Endothelial cell of umbilical vein (primary cell): ENCODE measurements at regions of chr2 and their contacts with region 1.

Region 1: GRCh38 chr2:119826370-119826961 is 66.7 kb downstream of the PTPN4 start:
- DNase-seq: peak; percentile 49
- H3K4me3 ChIP-seq: no peak overlapping the region
- H3K27ac ChIP-seq: no peak overlapping the region
- H3K4me1 ChIP-seq: peaks cover 9% of the 10 kb centered on the region
- H3K27me3 ChIP-seq: no peaks in the 10 kb centered on the region
- CTCF ChIP-seq: peak; percentile 68 to 71
- POLR2A ChIP-seq: no peak

Region 2: DNA sequence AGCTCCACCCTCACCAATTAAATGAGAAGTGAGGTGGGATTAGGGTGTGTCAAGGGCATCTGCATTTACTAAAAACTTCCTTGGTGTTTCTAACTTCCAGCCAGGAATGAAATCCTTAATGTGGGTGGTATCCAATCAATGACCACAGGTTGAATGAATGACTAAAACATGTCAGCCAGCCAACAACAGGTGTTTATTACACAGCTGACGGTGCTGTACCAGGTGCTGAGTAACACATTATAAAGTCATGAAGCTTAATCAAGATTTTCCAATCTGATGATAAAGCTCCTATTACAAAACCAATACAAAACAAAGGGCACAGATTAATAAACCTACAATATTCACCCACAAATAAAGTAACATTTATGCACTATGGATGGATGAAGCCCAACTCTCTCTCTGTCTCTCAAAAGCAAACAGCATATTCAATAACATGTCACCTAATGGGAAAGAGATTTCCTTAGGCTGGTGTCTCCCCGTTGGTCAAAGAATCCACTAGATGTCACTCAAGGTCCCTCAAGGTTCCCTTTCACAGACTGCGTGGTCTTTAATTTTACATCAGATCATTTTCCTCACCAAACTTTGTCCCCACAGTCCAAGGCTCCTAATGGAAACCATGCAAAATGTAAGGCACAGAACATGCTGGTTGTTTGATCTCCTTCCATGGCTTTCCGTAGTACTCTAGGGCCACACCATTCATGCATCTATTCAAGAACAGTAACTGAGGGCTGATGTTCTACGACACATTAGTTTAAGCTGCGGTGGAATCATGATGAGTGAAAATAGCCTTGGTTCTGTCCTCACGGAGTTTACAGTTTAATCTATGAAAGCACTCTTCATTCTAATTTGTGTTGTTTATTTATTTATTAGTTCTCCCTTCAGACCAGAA is 73.2 kb before region 1 on chr2:
- CTCF ChIA-PET with region 1: interaction called, 186 read pairs
- POLR2A ChIA-PET with region 1: no interaction called
- dilution Hi-C with region 1: no loop called
- intact Hi-C with region 1: loop called (anchors 1 kb)
- DNase-seq: peak; percentile 65
- H3K4me3 ChIP-seq: no peak overlapping the region
- H3K27ac ChIP-seq: no peak overlapping the region
- H3K4me1 ChIP-seq: peaks cover 14% of the 10 kb centered on the region
- H3K27me3 ChIP-seq: no peaks in the 10 kb centered on the region
- CTCF ChIP-seq: peak; percentile 67 to 68
- POLR2A ChIP-seq: no peak

Region 3: DNA sequence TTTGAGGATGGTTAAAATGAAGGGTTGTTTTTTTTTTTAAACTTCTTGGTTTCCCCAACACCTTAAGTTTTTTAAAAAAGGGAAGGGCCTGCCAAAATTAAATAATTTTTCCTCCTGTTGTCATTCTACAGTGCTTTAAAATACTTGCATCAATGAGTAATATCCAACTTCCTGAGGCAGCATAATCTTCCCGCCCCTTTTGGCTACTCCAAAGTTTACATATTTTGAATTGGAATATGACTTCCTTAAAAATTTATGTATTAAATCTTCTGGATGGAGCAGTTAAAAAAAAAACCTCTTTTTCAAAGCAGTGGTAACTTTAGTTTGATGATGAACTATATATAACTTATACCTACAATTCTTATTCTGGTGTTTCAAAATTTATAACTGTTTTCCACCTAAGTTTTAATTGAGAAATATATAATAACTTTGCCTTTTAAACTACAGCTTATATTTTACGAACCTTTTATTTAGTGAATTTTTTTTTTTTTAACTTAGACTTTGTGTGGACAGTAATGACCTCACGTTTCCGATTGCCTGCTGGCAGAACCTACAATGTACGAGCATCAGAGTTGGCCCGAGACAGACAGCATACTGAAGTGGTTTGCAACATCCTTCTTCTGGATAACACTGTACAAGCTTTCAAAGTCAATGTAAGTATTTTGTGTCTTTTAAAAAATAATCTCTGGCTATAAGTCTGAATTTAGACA is 17.0 kb before region 1 on chr2:
- CTCF ChIA-PET with region 1: interaction called, 17 read pairs
- POLR2A ChIA-PET with region 1: no interaction called
- dilution Hi-C with region 1: no loop called
- intact Hi-C with region 1: no loop called
- DNase-seq: peak; percentile 88
- H3K4me3 ChIP-seq: peak overlapping the region in 2 of 3 experiments; percentile 7 to 43
- H3K27ac ChIP-seq: peak overlapping the region; percentile 96
- H3K4me1 ChIP-seq: peaks cover 22% of the 10 kb centered on the region
- H3K27me3 ChIP-seq: no peaks in the 10 kb centered on the region
- CTCF ChIP-seq: no peak
- POLR2A ChIP-seq: no peak

Region 4: DNA sequence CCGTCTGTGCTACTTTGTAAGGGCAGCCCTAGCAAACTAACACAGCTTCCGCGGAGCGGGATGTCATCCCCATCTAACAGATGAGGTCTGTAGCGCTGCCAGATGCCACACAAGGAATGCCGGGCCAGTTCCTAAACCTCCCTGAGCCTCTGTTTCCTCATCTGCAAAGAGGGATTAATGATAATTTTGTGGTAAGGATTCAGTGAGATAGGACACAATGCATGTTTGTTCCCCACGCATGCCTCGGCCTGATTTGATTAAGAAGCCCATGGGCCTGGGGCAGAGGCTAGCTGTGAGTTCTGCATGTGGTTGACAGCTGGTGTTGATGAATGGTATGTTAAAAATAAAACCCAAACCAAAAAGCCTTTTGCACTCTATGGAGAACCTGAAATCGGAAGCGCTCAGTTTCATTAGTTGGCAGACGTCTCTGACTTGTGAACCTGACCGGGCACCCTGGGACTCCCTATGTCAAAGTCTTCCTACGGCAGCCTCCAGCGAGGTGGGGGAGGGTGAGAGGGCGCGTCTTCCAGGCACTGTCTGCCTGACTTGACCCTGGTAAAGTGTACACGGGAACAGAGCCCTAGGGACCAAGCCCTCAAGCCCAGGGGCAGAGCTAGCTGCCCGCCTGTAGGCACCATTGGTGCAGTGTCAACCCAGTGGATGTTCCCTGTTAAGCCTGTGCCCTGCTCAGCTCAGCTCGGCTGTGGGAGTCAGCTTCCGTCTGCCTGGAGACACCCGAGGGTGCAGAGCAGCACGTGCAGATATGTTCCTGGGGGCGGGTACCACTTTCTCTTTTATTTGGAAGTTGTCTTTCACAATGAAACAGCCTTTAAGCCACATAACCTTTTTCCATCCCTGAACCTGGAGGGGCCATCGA is 504.7 kb after region 1 on chr2:
- CTCF ChIA-PET with region 1: no interaction called
- POLR2A ChIA-PET with region 1: no interaction called
- dilution Hi-C with region 1: no loop called
- intact Hi-C with region 1: no loop called
- DNase-seq: no peak
- H3K4me3 ChIP-seq: no peak overlapping the region
- H3K27ac ChIP-seq: no peak overlapping the region
- H3K4me1 ChIP-seq: no peaks in the 10 kb centered on the region
- H3K27me3 ChIP-seq: peaks cover 2 to 9% of the 10 kb centered on the region in 2 experiments
- CTCF ChIP-seq: no peak
- POLR2A ChIP-seq: no peak